ENCODE measurements at regions of chr3 and their contacts with region 1.

Region 1: GRCh38 chr3:106215047-106215446 is 346.2 kb upstream of the CBLB start:
- DNase-seq: peak; percentile 5
- H3K4me3 Mint-ChIP-seq: peak overlapping the region; percentile 43
- H3K27ac Mint-ChIP-seq: peak overlapping the region; percentile 82
- H3K4me1 Mint-ChIP-seq: peaks cover 56% of the 10 kb centered on the region
- H3K27me3 Mint-ChIP-seq: no peaks in the 10 kb centered on the region

Region 2: DNA sequence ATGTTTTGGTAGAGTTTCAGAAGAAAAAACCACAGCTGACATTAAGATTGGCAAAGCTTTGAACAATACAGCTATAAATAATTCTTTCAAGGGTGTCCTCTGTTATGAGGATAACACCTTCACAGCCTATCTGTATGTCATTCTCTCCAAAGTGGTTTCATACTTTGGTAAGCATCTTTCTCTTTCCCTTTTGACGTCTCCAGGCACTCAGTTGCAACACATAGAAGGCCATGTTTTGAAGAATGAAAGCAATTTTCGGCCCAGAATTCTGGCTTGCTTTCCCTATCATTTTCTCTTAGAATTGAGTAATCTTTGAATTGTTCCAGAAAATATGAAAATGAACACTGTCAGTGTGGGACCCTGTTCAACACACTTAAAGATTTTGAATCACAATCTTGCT is 146.3 kb before region 1 on chr3:
- intact Hi-C with region 1: loop called (anchors 2 kb)
- DNase-seq: peak; percentile 3
- H3K4me3 Mint-ChIP-seq: no peak overlapping the region
- H3K27ac Mint-ChIP-seq: peak overlapping the region; percentile 87
- H3K4me1 Mint-ChIP-seq: peaks cover 15% of the 10 kb centered on the region
- H3K27me3 Mint-ChIP-seq: no peaks in the 10 kb centered on the region

Region 3: GRCh38 chr3:106232956-106233355 is 17.9 kb after region 1 on chr3:
- intact Hi-C with region 1: loop called (anchors 1 kb)
- DNase-seq: no peak
- H3K4me3 Mint-ChIP-seq: no peak overlapping the region
- H3K27ac Mint-ChIP-seq: peak overlapping the region; percentile 46
- H3K4me1 Mint-ChIP-seq: peaks cover 46% of the 10 kb centered on the region
- H3K27me3 Mint-ChIP-seq: no peaks in the 10 kb centered on the region

Region 4: GRCh38 chr3:106255870-106256248 is 40.8 kb after region 1 on chr3:
- intact Hi-C with region 1: no loop called
- DNase-seq: no peak
- H3K4me3 Mint-ChIP-seq: no peak overlapping the region
- H3K27ac Mint-ChIP-seq: no peak overlapping the region
- H3K4me1 Mint-ChIP-seq: peaks cover 8% of the 10 kb centered on the region
- H3K27me3 Mint-ChIP-seq: no peaks in the 10 kb centered on the region

Region 5: DNA sequence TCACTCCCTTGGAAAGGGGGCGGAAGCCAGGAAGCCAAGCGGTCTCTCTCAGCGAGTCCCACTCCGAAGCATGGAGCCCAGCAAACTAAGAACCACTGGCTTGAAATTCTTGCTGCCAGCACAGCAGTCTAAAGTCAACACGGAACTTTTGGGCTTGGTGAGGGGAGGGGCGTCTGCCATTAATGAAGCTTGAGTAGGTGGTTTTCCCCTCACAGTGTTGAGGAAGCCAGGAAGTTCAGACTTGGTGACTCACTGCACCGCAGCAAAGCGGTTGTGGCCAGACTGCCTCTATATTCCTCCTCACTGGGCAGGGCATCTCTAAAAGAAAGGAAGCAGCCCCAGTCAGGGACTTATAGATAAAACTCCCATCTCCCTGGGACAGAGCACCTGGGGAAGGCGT is 319.2 kb after region 1 on chr3:
- intact Hi-C with region 1: loop called (anchors 10 kb)
- DNase-seq: peak; percentile 40
- H3K4me3 Mint-ChIP-seq: no peak overlapping the region
- H3K27ac Mint-ChIP-seq: peak overlapping the region; percentile 72
- H3K4me1 Mint-ChIP-seq: peaks cover 28% of the 10 kb centered on the region
- H3K27me3 Mint-ChIP-seq: no peaks in the 10 kb centered on the region